ENCODE measurements at regions of chr1 and their contacts with region 1.

Region 1: DNA sequence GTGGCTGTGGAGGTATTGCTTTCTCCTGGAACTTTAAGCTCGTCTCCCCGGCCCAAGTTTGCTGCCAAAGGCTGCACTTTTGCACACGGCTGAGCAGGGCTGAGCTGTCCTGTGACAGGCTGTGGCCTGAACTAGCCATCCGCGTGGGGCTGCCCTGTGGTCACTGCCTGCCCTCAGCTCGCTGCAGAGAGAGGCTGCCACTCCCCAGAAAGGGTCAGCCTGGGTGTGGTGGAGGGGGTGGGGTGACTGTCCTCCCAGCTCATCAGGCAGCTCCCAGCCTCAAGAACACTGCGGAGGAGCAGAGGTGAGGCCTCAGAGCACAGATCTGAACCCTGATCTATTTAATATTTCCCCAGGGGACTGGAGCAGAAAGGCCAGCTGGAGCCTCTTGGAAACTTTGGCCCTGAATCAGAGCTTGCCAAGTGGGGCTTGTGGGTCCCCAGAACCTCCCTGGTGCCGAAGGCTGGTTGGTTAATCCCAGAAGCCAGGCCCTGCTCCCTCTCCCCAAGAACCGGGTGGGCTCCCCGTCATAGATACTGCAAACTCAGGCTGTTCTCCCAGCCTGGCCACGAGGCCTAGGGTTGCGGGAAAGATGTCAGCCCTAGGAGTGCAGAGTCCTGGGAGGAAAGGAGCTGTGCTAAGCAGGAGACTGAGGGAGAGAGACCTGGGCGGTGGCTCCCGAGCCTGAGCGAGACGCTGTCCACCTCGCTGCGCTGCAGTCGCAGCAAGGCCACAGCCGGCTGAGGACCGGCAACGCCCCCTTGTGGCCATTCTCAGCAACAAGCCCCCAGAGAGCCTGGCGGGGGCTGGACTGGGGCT is 125.1 kb upstream of the IPO9 start:
- DNase-seq: peak; percentile 74 to 86
- ATAC-seq: peak; percentile 94

Region 2: GRCh38 chr1:201559679-201560162 is 144.1 kb before region 1 on chr1:
- intact Hi-C with region 1: loop called (anchors 2 to 5 kb)
- DNase-seq: peak; percentile 71 to 80
- ATAC-seq: peak; percentile 98

Region 3: DNA sequence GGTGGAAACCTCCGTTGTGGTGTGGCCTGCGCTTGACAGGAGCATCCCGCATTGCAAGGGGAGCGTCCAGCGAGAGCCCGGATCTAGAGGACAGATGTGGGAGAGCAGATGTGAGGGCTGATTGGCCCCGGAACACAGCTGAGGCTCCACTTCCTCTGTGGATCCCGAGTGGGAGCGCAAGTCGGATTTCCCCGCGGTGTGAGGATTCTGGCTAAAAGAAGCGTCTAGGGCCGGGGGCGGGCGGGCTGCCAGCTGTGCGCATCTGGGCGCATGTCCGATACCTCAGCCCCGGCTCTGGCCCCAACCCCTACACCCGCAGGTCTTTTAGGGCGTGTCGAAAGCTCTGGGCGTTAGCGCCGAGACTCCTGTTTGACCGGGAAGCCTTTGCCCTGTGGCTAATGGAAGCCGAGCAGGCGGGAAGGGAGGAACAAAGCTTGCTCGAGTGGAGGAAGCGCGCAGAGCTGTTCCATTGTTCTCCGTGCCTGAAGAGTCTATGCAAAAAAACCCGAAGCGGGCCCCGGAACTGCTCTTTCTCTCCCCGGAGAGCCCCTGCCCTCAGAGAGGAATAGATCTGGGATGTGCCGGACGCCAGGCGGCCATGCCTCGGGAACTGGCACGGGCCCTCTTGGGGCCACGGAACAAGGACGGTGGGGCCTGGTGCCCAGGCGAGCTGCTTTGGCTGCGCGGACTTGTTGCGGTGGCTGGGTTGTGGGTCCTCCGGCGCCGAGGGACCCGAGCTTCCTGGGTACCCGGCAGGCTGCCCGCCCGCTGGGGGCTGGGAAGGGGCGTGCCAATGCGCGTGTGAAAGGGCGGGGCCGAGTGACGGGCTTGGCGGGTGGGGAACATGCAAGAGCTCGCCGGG is 53.8 kb before region 1 on chr1:
- intact Hi-C with region 1: no loop called
- DNase-seq: peak; percentile 91 to 94
- ATAC-seq: peak; percentile 87

Region 4: DNA sequence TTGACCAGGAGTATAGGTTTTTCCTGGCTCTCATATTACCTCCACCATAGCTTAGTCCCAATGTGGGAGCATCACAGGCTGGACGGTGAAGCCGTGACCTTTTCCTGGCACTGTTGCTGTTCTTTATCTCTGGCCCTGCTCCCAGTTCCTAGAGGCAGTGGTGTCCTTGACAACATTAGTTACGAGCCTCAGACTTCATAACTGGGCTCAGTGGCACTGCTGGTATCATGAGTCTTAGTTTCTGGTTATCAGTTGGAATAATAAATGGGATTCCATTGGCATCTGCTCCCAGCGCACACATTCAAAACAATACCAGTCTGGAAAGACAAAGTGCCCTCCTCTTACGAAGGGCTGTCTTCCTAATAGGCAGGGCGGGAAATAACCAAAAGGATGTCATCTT is 286.6 kb after region 1 on chr1:
- intact Hi-C with region 1: no loop called
- DNase-seq: no peak
- ATAC-seq: no peak

Measured in left colon (tissue), 2 donors.